GM12878 (cell line): ENCODE measurements at regions of chr16 and their contacts with region 1.

Region 1: GRCh38 chr16:85010931-85011845 is at the start of gene ZDHHC7:
- DNase-seq: peak; percentile 45
- ATAC-seq: peak; percentile 93
- H3K4me3 ChIP-seq: peak within 1 kb of the TSS; percentile 90
- H3K27ac ChIP-seq: peak within 1 kb of the TSS; percentile 95
- H3K4me1 ChIP-seq: peaks cover 5% of the 10 kb centered on the region; the same call in 1 of the 2 replicates
- H3K27me3 ChIP-seq: no peaks in the 10 kb centered on the region
- CTCF ChIP-seq: peak in 1 of 3 experiments; percentile 10; a peak in 1 of 6 replicates
- EP300 ChIP-seq: 0 out of 4 replicates have a peak, but pooled peaks of 1 of the 2 experiments have one; percentile 12
- POLR2A ChIP-seq: peak; percentile 94
- RAD21 ChIP-seq: no peak
- polyA plus RNA-seq, gene ZDHHC7: 0.87 to 2.8 TPM

Region 2: GRCh38 chr16:84851192-84852127 is 159.7 kb before region 1 on chr16:
- CTCF ChIA-PET with region 1: no interaction called
- POLR2A ChIA-PET with region 1: no interaction called
- RAD21 ChIA-PET with region 1: no interaction called
- SMC1A ChIA-PET with region 1: no interaction called
- in situ Hi-C with region 1: no loop called
- intact Hi-C with region 1: no loop called
- DNase-seq: no peak
- ATAC-seq: no peak
- H3K4me3 ChIP-seq: no peak overlapping the region
- H3K27ac ChIP-seq: no peak overlapping the region
- H3K4me1 ChIP-seq: no peaks in the 10 kb centered on the region
- H3K27me3 ChIP-seq: peaks cover 0 to 2% of the 10 kb centered on the region in 2 experiments; a peak in 3 of 4 replicates
- CTCF ChIP-seq: no peak
- EP300 ChIP-seq: no peak
- POLR2A ChIP-seq: no peak
- RAD21 ChIP-seq: no peak

Region 3: DNA sequence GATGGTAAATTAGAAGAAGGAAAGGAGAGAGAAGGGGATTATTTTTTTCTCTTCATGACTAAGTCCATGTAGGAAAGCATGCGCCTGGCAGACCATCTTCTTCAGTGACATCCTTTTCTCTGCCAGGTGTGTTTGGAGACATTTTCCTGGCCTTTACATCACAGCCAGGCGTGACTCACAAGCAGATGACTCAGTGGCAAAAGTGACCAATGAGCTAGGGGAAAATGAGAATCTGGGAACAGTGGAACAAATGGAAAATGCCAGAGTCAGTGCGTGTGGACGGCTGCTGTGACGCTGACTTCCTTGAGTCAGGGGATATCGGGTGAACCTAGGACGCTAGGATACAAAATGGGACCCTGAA is 25.8 kb after region 1 on chr16:
- CTCF ChIA-PET with region 1: no interaction called
- POLR2A ChIA-PET with region 1: no interaction called
- RAD21 ChIA-PET with region 1: no interaction called
- SMC1A ChIA-PET with region 1: no interaction called
- in situ Hi-C with region 1: no loop called
- intact Hi-C with region 1: no loop called
- DNase-seq: no peak
- ATAC-seq: no peak
- H3K4me3 ChIP-seq: no peak overlapping the region
- H3K27ac ChIP-seq: no peak overlapping the region
- H3K4me1 ChIP-seq: no peaks in the 10 kb centered on the region
- H3K27me3 ChIP-seq: no peaks in the 10 kb centered on the region
- CTCF ChIP-seq: no peak
- EP300 ChIP-seq: no peak
- POLR2A ChIP-seq: no peak
- RAD21 ChIP-seq: no peak

Region 4: DNA sequence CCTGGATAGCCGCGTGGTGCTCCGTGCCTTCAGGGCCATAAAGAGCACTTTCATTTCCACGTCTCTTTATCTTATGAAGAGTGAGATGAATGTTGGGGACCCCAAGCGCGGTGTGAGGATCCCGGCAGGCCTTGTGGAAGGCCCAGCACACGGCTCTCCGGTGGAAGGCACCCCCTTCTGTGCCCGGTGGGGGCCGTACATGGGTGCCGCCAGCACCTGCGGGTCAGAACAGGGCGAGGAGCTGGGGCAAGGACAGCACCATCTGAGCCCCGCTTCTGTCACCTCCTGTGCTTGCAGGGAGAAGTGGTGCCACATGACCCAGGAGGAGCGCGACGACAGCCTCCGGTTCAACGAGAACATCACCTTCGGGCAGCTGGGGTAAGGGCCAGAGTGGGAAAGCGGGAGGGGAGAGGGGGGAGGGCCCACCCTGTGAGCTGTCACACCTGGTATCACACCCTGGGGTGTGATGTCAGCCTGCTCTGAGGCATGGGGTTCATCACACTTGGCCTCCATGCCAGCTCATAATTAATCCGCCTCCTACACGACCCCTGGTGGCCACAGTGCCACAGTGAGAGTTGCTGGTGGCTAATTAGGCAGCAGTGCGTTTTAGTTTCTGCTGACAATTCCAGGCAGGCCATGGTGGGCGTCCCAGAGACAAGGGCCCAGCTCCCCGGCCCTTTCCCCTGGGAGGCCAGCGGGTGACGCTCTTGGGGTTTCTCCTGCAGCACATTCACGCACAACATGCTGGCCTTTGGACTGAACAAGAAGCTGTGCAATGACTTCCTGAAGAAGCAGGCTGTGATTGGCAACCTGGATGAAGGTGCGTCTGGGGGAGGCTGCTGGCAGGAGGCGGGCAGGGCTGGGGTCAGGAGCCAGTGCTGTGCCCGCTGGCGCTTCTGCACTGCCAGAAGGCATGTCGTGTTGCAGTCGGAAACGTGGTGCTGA is 75.4 kb after region 1 on chr16:
- CTCF ChIA-PET with region 1: interaction called, 19 read pairs
- POLR2A ChIA-PET with region 1: interaction called, 3 read pairs
- RAD21 ChIA-PET with region 1: interaction called, 6 read pairs
- SMC1A ChIA-PET with region 1: interaction called, 4 read pairs
- in situ Hi-C with region 1: no loop called
- intact Hi-C with region 1: loop called (anchors 5 kb)
- DNase-seq: no peak
- ATAC-seq: peak; percentile 91
- H3K4me3 ChIP-seq: no peak overlapping the region
- H3K27ac ChIP-seq: no peak overlapping the region
- H3K4me1 ChIP-seq: peaks cover 30% of the 10 kb centered on the region
- H3K27me3 ChIP-seq: no peaks in the 10 kb centered on the region
- CTCF ChIP-seq: peak; percentile 75 to 81 (median 79)
- EP300 ChIP-seq: no peak
- POLR2A ChIP-seq: no peak
- RAD21 ChIP-seq: peak; percentile 82